ENCODE measurements at regions of chr20 and their contacts with region 1.

Region 1: DNA sequence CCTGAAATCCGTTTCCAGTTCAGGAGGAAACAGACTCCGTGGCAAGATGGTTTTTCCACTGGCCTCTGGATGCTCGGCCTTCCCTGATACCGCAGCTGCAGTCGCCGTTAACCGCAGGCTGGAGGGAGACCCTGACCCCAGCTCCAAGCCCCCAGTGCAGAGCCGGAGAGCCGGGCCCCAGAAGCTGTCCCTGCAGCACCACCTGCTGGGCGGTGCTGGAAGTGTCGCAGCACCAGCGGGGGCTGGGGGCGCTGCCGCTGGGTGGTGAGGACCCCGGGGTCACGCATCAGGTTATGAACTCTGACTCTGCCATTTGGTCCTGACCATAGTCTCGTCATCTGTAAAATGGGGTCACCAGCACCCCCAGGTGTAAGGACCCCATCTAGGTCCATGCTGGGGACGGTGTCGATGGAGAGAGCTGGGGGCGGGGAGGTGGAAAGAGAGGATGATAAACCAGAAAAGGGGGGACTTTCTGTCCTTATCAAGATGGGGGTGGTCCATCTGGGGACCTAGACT is 20.7 kb upstream of the CHRNA4 start:
- DNase-seq: peak; percentile 79
- ATAC-seq: peak; percentile 65
- H3K4me3 Mint-ChIP-seq: no peak overlapping the region
- H3K27ac Mint-ChIP-seq: no peak overlapping the region
- H3K4me1 Mint-ChIP-seq: peaks cover 18% of the 10 kb centered on the region
- H3K27me3 Mint-ChIP-seq: peaks cover 15% of the 10 kb centered on the region
- CTCF ChIP-seq: peak; percentile 95

Region 2: GRCh38 chr20:63230800-63231268 is 151.0 kb before region 1 on chr20:
- CTCF ChIA-PET with region 1: interaction called, 12 read pairs
- POLR2A ChIA-PET with region 1: no interaction called
- DNase-seq: peak; percentile 80
- ATAC-seq: peak; percentile 75
- H3K4me3 Mint-ChIP-seq: no peak overlapping the region; the same call in 1 of the 2 replicates
- H3K27ac Mint-ChIP-seq: 0 out of 2 replicates have a peak overlapping the region, but pooled peaks have one; percentile 6
- H3K4me1 Mint-ChIP-seq: peaks cover 34% of the 10 kb centered on the region
- H3K27me3 Mint-ChIP-seq: peaks cover 11% of the 10 kb centered on the region
- CTCF ChIP-seq: no peak

Region 3: DNA sequence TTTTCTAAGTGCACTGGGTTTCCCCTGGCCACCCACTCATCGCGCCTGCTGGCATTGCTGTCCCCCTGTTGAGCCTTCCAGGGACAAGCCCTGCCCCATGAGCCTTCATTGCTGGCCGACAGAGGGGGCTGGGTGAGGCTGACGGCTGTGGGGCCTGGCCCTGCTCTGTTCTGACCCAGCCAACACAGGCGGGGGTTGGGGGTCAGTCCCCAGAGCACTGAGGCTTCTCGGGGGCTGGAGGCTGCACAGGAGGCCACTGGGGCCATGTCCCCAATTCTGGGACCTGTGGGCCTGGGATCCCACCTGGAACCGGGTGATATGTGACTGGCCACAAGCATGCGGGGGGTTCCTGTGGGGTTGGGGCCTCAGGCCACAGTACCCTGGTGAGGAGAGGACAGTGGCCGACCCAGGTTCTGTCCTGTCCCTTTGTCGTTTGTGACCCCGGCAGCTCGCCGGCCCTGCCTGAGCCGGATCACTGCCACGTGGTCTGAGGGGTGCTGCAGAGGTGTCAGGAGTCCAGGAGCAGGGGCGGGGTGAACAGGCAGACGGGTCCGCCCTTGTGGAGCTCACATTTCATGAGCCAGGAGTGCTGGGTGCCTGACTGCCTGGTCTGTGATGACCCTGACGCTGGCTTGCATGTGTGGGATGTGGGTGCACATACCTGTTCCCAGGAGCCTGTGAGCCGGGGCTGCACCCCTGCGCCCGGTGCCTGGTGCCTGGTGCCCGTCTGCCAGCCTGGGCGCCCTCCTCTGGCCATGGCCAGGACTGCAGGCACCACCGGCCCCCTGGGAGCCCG is 91.0 kb before region 1 on chr20:
- CTCF ChIA-PET with region 1: interaction called, 79 read pairs
- POLR2A ChIA-PET with region 1: no interaction called
- DNase-seq: peak; percentile 86
- ATAC-seq: peak; percentile 80
- H3K4me3 Mint-ChIP-seq: no peak overlapping the region
- H3K27ac Mint-ChIP-seq: no peak overlapping the region
- H3K4me1 Mint-ChIP-seq: peaks cover 15% of the 10 kb centered on the region
- H3K27me3 Mint-ChIP-seq: peaks cover 5% of the 10 kb centered on the region
- CTCF ChIP-seq: peak; percentile 94

Region 4: GRCh38 chr20:63315731-63316491 is 66.0 kb before region 1 on chr20:
- CTCF ChIA-PET with region 1: interaction called, 191 read pairs
- POLR2A ChIA-PET with region 1: no interaction called
- DNase-seq: no peak
- ATAC-seq: no peak
- H3K4me3 Mint-ChIP-seq: no peak overlapping the region
- H3K27ac Mint-ChIP-seq: no peak overlapping the region
- H3K4me1 Mint-ChIP-seq: no peaks in the 10 kb centered on the region
- H3K27me3 Mint-ChIP-seq: no peaks in the 10 kb centered on the region
- CTCF ChIP-seq: no peak

Region 5: DNA sequence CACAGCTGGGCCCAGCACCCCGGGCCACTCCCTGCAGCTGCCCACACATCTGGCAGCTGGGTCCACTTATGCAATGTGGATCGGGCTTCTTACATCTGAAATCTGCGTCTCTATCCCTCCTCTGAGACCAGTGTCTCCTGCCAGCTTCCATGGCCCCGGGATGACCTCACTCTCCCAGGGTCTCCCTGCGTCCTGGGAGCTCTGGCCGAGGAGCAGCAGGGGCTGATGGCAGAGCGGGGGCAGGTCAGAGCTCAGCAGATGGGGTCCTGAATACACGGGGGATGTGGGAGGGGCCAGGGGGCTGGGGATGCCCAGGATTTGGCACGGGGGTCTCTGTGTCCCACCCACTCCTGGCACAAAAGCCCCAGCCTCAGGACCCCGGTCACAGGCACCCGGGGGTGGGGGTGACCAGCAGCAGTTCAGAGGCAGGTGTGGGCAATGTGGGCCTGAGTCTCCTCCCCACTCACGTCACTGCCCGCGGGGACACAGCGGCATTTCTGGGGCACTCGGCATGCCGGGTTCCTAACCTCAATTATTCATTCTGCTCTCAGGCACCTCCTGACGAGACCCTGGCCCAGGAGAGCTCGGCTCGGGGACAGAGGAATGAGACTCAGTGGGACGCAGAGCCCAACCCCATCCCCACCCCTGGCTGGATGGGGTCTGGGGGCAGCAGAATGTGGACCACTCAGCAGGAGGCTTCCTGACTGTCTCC is 37.1 kb before region 1 on chr20:
- CTCF ChIA-PET with region 1: interaction called, 18 read pairs
- POLR2A ChIA-PET with region 1: interaction called, 3 read pairs
- DNase-seq: no peak
- ATAC-seq: no peak
- H3K4me3 Mint-ChIP-seq: no peak overlapping the region
- H3K27ac Mint-ChIP-seq: no peak overlapping the region
- H3K4me1 Mint-ChIP-seq: no peaks in the 10 kb centered on the region
- H3K27me3 Mint-ChIP-seq: no peaks in the 10 kb centered on the region
- CTCF ChIP-seq: no peak

Region 6: DNA sequence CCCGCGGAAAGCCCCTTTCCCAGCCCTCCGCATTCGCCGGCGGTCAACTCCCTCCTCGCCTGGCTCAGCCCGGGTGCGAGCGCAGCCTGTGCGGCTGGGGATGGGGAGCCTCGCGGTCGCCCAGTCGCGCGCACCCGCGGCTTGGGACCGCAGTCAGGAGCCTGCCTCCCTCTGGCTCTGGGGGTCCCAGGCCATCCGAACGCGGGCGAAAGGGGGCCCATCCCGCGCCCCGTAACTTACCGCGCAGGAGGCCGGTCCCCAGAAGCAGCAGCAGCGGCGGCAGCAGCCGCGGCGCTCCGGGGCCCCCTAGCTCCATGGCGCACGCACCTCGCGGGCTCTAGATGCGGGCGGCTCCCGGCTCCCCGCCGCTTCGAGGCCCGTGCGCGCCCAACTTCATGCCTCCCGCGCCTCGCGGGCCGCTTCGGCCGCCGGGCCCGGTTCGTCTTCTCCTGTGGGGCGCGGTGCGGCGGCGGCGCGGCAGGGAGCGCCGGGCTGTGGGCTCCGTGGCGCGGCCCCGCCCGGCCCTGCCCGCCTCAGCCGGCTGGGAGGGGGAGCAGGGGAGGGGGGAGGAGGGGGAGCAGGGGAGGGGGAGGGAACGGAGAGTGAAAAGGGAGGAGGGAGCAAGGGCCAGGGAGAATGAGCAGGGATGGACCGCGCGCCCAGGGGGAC is 20.9 kb before region 1 on chr20 and contains the start of gene CHRNA4:
- CTCF ChIA-PET with region 1: interaction called, 68 read pairs
- POLR2A ChIA-PET with region 1: interaction called, 4 read pairs
- DNase-seq: peak; percentile 49
- ATAC-seq: peak; percentile 41
- H3K4me3 Mint-ChIP-seq: peak within 1 kb of the TSS; percentile 60
- H3K27ac Mint-ChIP-seq: no peak within 1 kb of the TSS
- H3K4me1 Mint-ChIP-seq: peaks cover 11% of the 10 kb centered on the region
- H3K27me3 Mint-ChIP-seq: peaks cover 12% of the 10 kb centered on the region
- CTCF ChIP-seq: no peak
- total RNA-seq, gene CHRNA4: 2.5 to 5.7 TPM (median 4.8 TPM) in 3 replicates

Region 7: DNA sequence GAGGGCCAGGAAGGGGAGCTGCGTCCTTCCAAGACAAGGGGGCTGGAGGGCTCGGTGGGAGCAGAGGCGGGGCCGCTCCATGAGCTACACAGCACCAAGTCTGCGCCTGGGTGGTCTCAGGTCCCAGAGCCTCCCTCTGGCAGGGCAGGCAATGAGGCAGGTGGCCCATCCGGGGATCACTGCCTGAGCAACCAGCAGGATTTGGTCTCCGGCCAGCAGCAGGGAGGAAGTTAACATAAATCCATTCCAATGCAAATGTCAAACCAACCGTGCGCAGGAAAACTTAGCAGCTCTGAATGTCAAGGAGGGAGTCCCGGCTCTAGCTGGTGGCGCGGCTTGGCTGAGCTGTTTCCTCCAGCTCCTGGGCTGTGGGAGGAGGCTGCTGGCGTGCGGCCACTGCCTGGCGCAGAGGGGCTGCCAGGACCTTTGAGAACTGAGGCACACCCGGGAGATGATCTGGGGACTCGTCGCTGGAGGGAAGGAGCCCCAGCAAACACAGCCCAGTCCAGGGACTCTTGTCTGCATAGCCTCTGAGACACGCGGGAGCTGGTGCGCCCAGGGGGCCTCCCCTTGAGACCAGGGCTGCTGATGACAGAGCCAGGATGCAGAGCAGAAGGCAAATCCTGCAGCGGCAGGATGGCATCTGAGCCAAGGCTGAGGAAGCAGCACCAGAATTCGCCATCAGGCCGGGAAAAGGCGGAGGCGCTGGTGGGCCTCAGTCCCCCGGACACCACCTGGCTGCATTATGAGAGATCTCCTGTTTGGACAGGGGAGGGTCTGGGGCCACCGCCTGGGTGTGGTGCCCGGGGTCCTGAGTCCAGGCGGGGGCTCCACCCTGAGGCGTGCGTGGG is 12.4 kb after region 1 on chr20:
- CTCF ChIA-PET with region 1: interaction called, 70 read pairs
- POLR2A ChIA-PET with region 1: interaction called, 3 read pairs
- DNase-seq: peak; percentile 67
- ATAC-seq: peak; percentile 80
- H3K4me3 Mint-ChIP-seq: peak overlapping the region; percentile 16; the same call in 1 of the 2 replicates
- H3K27ac Mint-ChIP-seq: peak overlapping the region; percentile 84
- H3K4me1 Mint-ChIP-seq: peaks cover 27% of the 10 kb centered on the region
- H3K27me3 Mint-ChIP-seq: no peaks in the 10 kb centered on the region; the same call in 1 of the 2 replicates
- CTCF ChIP-seq: no peak

Region 8: GRCh38 chr20:63574156-63574828 is 192.4 kb after region 1 on chr20 and contains the start of gene HELZ2:
- CTCF ChIA-PET with region 1: no interaction called
- POLR2A ChIA-PET with region 1: no interaction called
- DNase-seq: peak; percentile 66
- ATAC-seq: peak; percentile 67
- H3K4me3 Mint-ChIP-seq: peak within 1 kb of the TSS; percentile 78
- H3K27ac Mint-ChIP-seq: peak within 1 kb of the TSS; percentile 72; the same call in 1 of the 2 replicates
- H3K4me1 Mint-ChIP-seq: no peaks in the 10 kb centered on the region
- H3K27me3 Mint-ChIP-seq: no peaks in the 10 kb centered on the region
- CTCF ChIP-seq: no peak
- total RNA-seq, gene HELZ2: 27.5 to 32.6 TPM (median 32.4 TPM) in 3 replicates